AG04450 (cell line): ENCODE measurements at regions of chr13 and their contacts with region 1.

Region 1: GRCh38 chr13:37014609-37015008 is 14.0 kb downstream of the EXOSC8 start:
- DNase-seq: peak; percentile 6
- H3K4me3 ChIP-seq: no peak overlapping the region
- H3K27ac ChIP-seq: no peak overlapping the region
- H3K27me3 ChIP-seq: no peaks in the 10 kb centered on the region
- CTCF ChIP-seq: no peak

Region 2: DNA sequence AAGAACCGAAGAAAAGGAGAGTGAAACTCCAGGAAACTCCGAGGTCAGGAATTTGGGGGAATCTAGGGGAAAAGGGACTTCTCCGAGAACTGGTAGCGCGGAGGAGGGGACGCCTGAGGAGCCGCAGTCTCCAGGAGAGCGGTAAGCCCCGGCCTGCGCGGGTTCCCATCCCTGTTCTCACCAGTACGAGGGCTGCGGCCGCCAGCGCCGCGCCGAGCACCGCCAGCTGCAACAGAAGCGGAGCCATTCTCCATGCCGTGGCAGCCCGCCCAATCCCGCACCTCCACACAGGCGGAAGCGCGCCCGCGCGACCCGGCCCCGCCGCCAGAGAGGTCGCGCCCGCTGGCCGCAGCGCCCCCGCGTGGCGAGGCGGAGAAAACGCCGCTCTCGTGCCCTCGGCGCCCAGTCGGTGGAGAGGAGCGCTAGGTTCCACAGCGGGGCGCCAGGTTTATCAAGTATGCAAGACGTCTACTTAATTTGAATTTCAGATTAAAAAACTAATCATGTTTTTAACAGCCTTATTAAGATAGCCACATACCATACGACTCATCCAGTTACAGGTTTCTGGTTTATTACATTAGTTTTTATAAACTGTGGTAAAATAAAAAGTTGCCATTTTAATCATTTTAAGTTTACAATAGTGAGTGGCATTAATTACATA is 15.4 kb before region 1 on chr13 and contains the start of gene ALG5:
- CTCF ChIA-PET with region 1: interaction called, 10 read pairs
- POLR2A ChIA-PET with region 1: interaction called, 5 read pairs
- DNase-seq: peak; percentile 57
- H3K4me3 ChIP-seq: peak within 1 kb of the TSS; percentile 96
- H3K27ac ChIP-seq: peak within 1 kb of the TSS; percentile 99
- H3K27me3 ChIP-seq: no peaks in the 10 kb centered on the region
- CTCF ChIP-seq: peak; percentile 66
- polyA plus RNA-seq, gene ALG5: 36.4 and 51.6 TPM in 2 replicates